ENCODE measurements at regions of chr19 and their contacts with region 1.

Region 1: GRCh38 chr19:38658462-38659306 is 11.2 kb downstream of the ACTN4 start:
- DNase-seq: peak in 1 of 2 donors; percentile 87
- H3K4me3 ChIP-seq: peak overlapping the region; percentile 34 to 47
- H3K27ac ChIP-seq: peak overlapping the region; percentile 92 to 96
- H3K4me1 ChIP-seq: peaks cover 42 to 93% of the 10 kb centered on the region in 2 donors
- H3K27me3 ChIP-seq: no peaks in the 10 kb centered on the region
- CTCF ChIP-seq: no peak

Region 2: DNA sequence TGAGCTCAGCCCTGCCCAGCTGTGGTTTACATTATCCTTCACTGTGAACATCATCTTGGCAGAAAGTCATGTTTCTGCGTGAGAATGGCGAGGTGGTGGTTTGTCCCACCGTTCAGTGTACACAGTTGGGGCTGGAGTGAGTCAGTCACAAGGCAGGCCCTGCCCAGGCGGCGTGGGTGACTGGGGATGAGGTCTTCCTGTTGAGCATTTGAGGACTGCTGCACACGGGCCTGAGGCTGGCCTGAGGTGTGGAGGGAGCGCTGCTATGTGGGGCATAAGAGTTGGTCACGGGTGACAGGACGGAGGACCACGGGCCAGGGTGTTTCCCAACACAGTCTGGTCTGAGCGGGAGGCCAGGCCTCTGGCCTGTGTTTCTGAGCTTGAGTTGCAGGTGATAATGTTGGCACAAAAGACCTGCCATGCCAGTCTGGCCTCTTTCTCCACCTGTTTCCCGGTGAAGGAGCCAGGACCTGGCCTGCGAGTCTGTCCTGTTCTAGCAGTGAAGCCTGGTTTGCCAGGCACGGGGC is 368.0 kb before region 1 on chr19:
- intact Hi-C with region 1: no loop called
- DNase-seq: no peak
- H3K4me3 ChIP-seq: no peak overlapping the region
- H3K27ac ChIP-seq: no peak overlapping the region
- H3K4me1 ChIP-seq: no peaks in the 10 kb centered on the region
- H3K27me3 ChIP-seq: no peaks in the 10 kb centered on the region
- CTCF ChIP-seq: no peak

Region 3: GRCh38 chr19:38683393-38684080 is 24.9 kb after region 1 on chr19:
- intact Hi-C with region 1: loop called (anchors 2 kb)
- DNase-seq: peak in 1 of 2 donors; percentile 92
- H3K4me3 ChIP-seq: peak overlapping the region in 1 of 2 donors; percentile 23
- H3K27ac ChIP-seq: peak overlapping the region; percentile 95 to 96
- H3K4me1 ChIP-seq: peaks cover 43 to 91% of the 10 kb centered on the region in 2 donors
- H3K27me3 ChIP-seq: no peaks in the 10 kb centered on the region
- CTCF ChIP-seq: no peak

Region 4: DNA sequence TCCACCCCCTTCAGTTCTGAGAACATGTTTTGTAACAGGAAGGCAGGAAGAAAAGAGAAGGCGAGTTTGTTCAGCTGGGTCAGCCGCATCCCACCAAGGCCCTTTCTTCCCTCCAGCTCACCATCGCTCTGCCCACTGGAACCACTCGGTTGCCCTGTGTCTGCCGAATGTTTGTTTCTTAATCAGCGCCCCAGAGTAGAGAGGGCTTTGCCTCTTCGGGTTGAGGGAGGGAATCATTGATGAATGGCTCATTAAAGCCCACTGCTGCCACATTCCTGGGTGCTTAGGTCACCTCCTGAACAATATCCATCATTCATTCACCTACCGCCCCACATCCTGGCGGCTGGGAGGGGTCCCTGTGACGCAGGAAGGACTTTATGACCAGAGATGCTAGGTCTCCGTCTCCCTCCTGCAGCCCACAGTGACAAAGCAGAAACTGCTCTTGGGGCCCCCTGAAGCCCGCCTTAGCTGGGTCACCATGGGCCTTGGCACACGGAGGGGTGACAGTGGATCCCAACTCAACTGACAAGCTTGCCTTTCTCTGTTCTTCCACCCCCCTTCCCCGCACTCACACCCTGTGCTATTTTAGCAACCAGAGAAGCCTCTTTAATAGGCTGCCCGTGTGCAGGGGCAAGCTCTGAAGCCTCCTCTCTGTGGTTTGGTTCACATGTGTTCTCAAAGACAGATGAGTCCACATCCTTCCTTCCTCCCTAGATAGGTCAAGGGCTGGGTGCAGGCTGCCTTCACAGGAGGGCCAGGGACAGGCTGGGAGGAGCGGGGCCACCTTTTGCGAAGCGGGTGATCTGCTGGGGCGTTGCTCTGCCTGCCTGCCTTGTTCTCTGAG is 34.9 kb after region 1 on chr19:
- intact Hi-C with region 1: loop called (anchors 2 kb)
- DNase-seq: peak in 1 of 2 donors; percentile 84
- H3K4me3 ChIP-seq: peak overlapping the region in 1 of 2 donors; percentile 29
- H3K27ac ChIP-seq: peak overlapping the region; percentile 95 to 98
- H3K4me1 ChIP-seq: peaks cover 52 to 85% of the 10 kb centered on the region in 2 donors
- H3K27me3 ChIP-seq: no peaks in the 10 kb centered on the region
- CTCF ChIP-seq: no peak

Region 5: DNA sequence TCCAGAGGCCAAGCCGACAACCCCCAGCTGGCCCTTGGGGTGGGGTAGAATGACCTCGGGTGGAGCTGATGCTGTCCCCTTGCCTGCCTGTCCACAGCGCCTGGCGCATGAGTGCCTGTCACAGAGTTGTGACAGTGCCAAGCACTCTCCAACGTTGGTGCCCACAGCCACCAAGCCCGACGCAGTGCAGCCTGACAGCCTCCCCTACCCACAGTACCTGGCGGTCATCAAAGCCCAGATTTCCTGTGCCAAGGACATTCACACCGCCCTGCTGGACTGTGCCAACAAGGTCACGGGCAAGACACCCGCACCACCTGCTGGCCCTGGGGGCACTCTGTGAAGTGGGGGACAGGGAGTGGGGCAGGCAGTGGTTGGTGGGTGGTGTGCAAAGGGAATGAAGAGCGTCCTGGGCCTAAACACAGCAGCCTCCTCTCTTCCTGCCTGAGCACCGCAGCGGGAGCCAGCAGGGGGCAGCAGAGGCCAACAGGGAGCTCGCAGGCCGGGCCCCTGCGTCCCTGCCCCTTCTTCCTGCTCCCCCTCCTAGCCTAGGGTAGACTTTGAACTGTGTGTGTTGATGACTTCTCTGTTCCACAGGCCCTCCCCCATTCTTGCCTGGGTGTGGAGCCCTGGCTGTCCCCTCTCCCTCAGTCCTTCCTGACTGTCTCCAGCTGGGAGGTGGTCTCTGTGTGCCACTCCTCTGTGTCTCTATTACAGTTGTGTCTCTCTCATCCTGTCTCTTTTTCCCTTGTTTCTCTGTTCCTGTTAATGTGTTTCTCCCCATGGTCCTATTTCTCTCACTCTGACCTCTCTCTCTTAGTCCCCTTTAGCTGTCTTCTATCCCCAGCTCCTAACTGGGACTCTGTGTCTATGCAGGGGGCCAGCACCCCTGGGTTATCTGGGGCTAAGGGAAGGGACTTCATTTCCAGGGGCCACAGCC is 738.9 kb after region 1 on chr19:
- intact Hi-C with region 1: loop called (anchors 10 kb)
- DNase-seq: peak; percentile 50 to 95
- H3K4me3 ChIP-seq: no peak overlapping the region
- H3K27ac ChIP-seq: peak overlapping the region; percentile 80 to 82
- H3K4me1 ChIP-seq: peaks cover 4 to 15% of the 10 kb centered on the region in 2 donors
- H3K27me3 ChIP-seq: no peaks in the 10 kb centered on the region
- CTCF ChIP-seq: peak; percentile 96 to 97 (median 97)

Measured in ascending aorta (tissue), 2 donors.